CD8-positive, alpha-beta T cell (primary cell): ENCODE measurements at regions of chr2 and their contacts with region 1.

Region 1: GRCh38 chr2:133157141-133157540 is 411.1 kb downstream of the NCKAP5 start:
- DNase-seq: no peak
- ATAC-seq: no peak
- H3K4me3 ChIP-seq: no peak overlapping the region
- H3K4me3 Mint-ChIP-seq: no peak overlapping the region
- H3K27ac ChIP-seq: no peak overlapping the region
- H3K27ac Mint-ChIP-seq: no peak overlapping the region
- H3K4me1 ChIP-seq: no peaks in the 10 kb centered on the region
- H3K4me1 Mint-ChIP-seq: no peaks in the 10 kb centered on the region
- H3K27me3 ChIP-seq: no peaks in the 10 kb centered on the region
- H3K27me3 Mint-ChIP-seq: no peaks in the 10 kb centered on the region
- CTCF ChIP-seq: no peak

Region 2: GRCh38 chr2:133213651-133214050 is 56.5 kb after region 1 on chr2:
- CTCF ChIA-PET with region 1: no interaction called
- POLR2A ChIA-PET with region 1: no interaction called
- intact Hi-C with region 1: loop called in 1 of 2 experiments (anchors 10 kb)
- DNase-seq: no peak
- ATAC-seq: no peak
- H3K4me3 ChIP-seq: no peak overlapping the region
- H3K4me3 Mint-ChIP-seq: no peak overlapping the region
- H3K27ac ChIP-seq: no peak overlapping the region
- H3K27ac Mint-ChIP-seq: no peak overlapping the region
- H3K4me1 ChIP-seq: no peaks in the 10 kb centered on the region
- H3K4me1 Mint-ChIP-seq: no peaks in the 10 kb centered on the region
- H3K27me3 ChIP-seq: no peaks in the 10 kb centered on the region
- H3K27me3 Mint-ChIP-seq: no peaks in the 10 kb centered on the region
- CTCF ChIP-seq: no peak

Region 3: GRCh38 chr2:133421516-133422312 is 264.6 kb after region 1 on chr2:
- CTCF ChIA-PET with region 1: no interaction called
- POLR2A ChIA-PET with region 1: no interaction called
- intact Hi-C with region 1: no loop called
- DNase-seq: no peak
- ATAC-seq: no peak
- H3K4me3 ChIP-seq: no peak overlapping the region
- H3K4me3 Mint-ChIP-seq: no peak overlapping the region
- H3K27ac ChIP-seq: no peak overlapping the region
- H3K27ac Mint-ChIP-seq: no peak overlapping the region
- H3K4me1 ChIP-seq: no peaks in the 10 kb centered on the region
- H3K4me1 Mint-ChIP-seq: no peaks in the 10 kb centered on the region
- H3K27me3 ChIP-seq: no peaks in the 10 kb centered on the region
- H3K27me3 Mint-ChIP-seq: peaks cover 4% of the 10 kb centered on the region
- CTCF ChIP-seq: no peak